ENCODE measurements at regions of chr2 and their contacts with region 1.

Region 1: DNA sequence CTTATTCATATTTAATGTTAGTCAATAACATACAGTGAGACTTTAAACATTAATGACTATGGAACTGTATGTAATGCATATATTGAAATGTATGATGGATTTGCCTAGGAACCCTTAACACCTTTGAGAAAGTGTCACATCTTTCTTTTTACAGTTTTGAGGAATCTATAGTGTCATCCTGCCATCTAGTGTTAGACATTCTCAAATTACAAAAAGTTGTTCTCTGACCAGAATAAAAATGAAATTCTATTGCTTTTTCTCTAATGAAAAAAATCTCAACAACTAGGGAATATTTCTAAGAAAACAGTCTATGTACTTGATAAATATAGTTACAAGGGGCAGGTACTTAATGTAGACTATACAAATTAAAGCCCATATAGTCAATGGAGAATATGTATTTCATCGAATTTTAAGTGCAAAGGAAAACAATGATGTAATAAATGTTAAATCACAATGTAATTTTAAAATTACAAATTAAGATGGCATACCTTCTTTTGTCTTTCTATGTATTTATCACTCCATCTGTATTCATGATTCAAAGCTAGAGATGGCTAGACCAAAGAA is 5.1 kb upstream of the CALCRL start:
- DNase-seq: no peak
- H3K4me3 ChIP-seq: no peak overlapping the region
- H3K27ac ChIP-seq: no peak overlapping the region
- H3K4me1 ChIP-seq: no peaks in the 10 kb centered on the region
- H3K27me3 ChIP-seq: no peaks in the 10 kb centered on the region
- CTCF ChIP-seq: peak; percentile 22 to 57 (median 39)
- POLR2A ChIP-seq: no peak

Region 2: DNA sequence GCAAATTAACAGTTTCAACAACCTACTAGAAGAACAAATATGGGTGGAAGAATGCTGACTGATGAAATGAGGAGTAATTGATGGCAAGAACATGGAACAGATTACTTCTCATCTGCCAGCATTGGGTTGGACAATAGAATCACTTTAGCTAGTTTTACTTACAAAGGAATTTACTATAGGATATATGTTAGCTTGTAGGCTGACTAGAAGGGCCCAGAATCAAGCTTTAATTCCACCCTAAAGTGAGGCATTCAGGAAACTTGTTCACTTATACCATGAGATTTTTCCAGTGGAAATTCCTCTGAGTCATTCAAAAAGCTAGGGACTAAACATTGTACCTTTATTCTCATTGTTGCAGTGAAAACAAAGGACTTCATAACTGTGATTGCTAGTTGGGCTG is 599.2 kb before region 1 on chr2:
- intact Hi-C with region 1: loop called (anchors 10 kb)
- DNase-seq: no peak
- H3K4me3 ChIP-seq: no peak overlapping the region
- H3K27ac ChIP-seq: no peak overlapping the region
- H3K4me1 ChIP-seq: no peaks in the 10 kb centered on the region
- H3K27me3 ChIP-seq: no peaks in the 10 kb centered on the region
- CTCF ChIP-seq: no peak
- POLR2A ChIP-seq: no peak

Region 3: DNA sequence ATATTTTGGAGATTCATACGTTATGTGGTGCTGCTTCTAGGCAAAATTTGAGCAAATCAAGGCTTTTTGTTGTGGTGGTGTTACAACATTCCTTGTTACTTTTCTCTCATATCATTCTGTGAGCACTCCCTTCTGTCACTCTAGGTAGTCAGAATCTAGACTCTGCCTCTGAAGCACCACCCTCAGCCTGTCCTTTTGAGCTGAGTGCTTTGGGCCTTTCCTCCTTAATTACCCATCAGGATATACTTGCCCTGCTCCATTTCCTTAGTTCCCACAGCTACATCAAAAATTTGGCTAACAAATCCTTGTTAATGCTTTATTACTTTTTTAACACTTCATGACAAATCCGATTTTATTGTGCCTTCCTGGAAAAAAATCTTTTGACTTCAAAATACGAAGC is 294.7 kb before region 1 on chr2:
- intact Hi-C with region 1: no loop called
- DNase-seq: no peak
- H3K4me3 ChIP-seq: no peak overlapping the region
- H3K27ac ChIP-seq: peak overlapping the region in 1 of 2 donors; percentile 31
- H3K4me1 ChIP-seq: no peaks in the 10 kb centered on the region
- H3K27me3 ChIP-seq: no peaks in the 10 kb centered on the region
- CTCF ChIP-seq: no peak
- POLR2A ChIP-seq: no peak

Region 4: DNA sequence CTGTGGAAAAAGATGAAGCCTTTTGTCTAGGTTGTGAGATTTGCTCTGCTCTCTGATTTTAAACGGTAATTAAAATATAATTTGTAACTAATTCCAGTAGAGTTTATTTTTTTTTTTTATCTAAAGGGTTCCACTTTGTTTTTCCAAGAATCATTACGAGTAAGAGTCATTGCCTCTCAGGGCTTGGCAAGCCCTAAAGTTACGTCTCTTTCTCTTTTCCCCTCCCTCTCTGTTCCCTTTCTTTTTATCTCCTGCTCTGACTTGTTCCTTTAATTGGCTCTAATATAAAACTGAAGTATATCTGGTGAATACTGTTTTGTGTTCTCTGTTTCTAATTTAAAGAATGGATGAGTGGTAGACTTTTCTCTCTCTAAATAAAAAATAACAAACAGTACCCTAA is 80.9 kb before region 1 on chr2:
- intact Hi-C with region 1: no loop called
- DNase-seq: no peak
- H3K4me3 ChIP-seq: no peak overlapping the region
- H3K27ac ChIP-seq: peak overlapping the region in 1 of 2 donors; percentile 5
- H3K4me1 ChIP-seq: no peaks in the 10 kb centered on the region
- H3K27me3 ChIP-seq: no peaks in the 10 kb centered on the region
- CTCF ChIP-seq: no peak
- POLR2A ChIP-seq: no peak

Region 5: GRCh38 chr2:187719510-187719909 is 266.4 kb after region 1 on chr2:
- intact Hi-C with region 1: no loop called
- DNase-seq: no peak
- H3K4me3 ChIP-seq: no peak overlapping the region
- H3K27ac ChIP-seq: no peak overlapping the region
- H3K4me1 ChIP-seq: no peaks in the 10 kb centered on the region
- H3K27me3 ChIP-seq: no peaks in the 10 kb centered on the region
- CTCF ChIP-seq: no peak
- POLR2A ChIP-seq: no peak

Measured in uterus (tissue), 4 donors.